K562 (cell line): ENCODE measurements at regions of chr19 and their contacts with region 1.

Region 1: GRCh38 chr19:49983645-49984229 is 22.8 kb upstream of the SIGLEC11 start:
- DNase-seq: peak; percentile 71 to 83 (median 77)
- ATAC-seq: peak; percentile 90
- H3K4me3 ChIP-seq: no peak overlapping the region
- H3K27ac ChIP-seq: no peak overlapping the region
- H3K4me1 ChIP-seq: peaks cover 13 to 20% of the 10 kb centered on the region in 2 experiments; a peak in 4 of 5 replicates
- H3K27me3 ChIP-seq: no peaks in the 10 kb centered on the region
- CTCF ChIP-seq: peak; percentile 88 to 96 (median 94)
- EP300 ChIP-seq: no peak
- POLR2A ChIP-seq: no peak
- RAD21 ChIP-seq: peak; percentile 76 to 83

Region 2: GRCh38 chr19:49889687-49890348 is 93.9 kb before region 1 on chr19:
- CTCF ChIA-PET with region 1: no interaction called
- POLR2A ChIA-PET with region 1: no interaction called
- in situ Hi-C with region 1: loop called (anchors 5 kb)
- intact Hi-C with region 1: no loop called
- DNase-seq: peak; percentile 64 to 95 (median 68)
- ATAC-seq: peak; percentile 86
- H3K4me3 ChIP-seq: peak overlapping the region; percentile 47
- H3K27ac ChIP-seq: peak overlapping the region; percentile 89
- H3K4me1 ChIP-seq: peaks cover 12 to 49% of the 10 kb centered on the region in 2 experiments
- H3K27me3 ChIP-seq: peaks cover 2 to 3% of the 10 kb centered on the region in 2 experiments; a peak in 3 of 5 replicates
- CTCF ChIP-seq: peak; percentile 89 to 94 (median 91)
- EP300 ChIP-seq: peak; percentile 34; the same call in 1 of the 2 replicates
- POLR2A ChIP-seq: peak; percentile 63
- RAD21 ChIP-seq: peak; percentile 32 to 70; a peak in 3 of 4 replicates

Region 3: DNA sequence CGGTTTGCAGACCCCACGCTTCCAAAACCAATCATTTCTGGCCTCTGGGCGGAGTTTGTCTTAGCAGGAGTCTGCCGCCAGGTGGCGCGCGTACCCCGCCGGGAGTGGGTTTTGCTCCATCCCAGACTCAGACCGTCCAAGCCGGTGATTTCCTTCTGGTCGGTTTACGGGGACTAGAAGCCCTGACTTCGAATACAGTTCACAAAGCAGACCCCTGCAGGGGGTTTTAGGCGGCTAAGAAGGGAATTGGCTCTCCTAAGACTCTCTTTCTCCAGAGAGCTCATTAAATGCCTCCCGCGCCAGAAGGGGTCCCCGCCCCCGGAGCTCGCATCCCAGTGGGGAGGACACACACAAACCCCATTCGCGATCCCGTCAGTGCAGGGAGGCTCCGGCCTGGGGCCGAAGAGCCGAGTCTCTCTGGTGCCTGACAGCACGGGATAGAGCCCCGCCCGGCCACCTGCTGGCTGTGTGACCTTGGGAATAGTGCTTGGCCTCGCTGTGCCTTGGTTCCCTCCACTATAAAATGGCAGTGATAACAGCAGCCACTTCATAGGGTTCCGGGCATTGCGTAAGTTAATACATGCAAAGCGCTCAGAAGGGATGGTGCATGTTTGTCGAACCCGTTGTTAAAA is 45.9 kb before region 1 on chr19:
- CTCF ChIA-PET with region 1: interaction called, 61 read pairs
- POLR2A ChIA-PET with region 1: interaction called, 4 read pairs
- in situ Hi-C with region 1: loop called (anchors 5 kb)
- intact Hi-C with region 1: loop called (anchors 1 kb)
- DNase-seq: peak; percentile 75 to 87 (median 80)
- ATAC-seq: peak; percentile 64
- H3K4me3 ChIP-seq: peak overlapping the region; percentile 31
- H3K27ac ChIP-seq: no peak overlapping the region
- H3K4me1 ChIP-seq: peaks cover 8 to 20% of the 10 kb centered on the region in 2 experiments; a peak in 3 of 5 replicates
- H3K27me3 ChIP-seq: no peaks in the 10 kb centered on the region
- CTCF ChIP-seq: peak; percentile 97 to 98 (median 98)
- EP300 ChIP-seq: no peak
- POLR2A ChIP-seq: no peak
- RAD21 ChIP-seq: peak; percentile 95 to 96

Region 4: DNA sequence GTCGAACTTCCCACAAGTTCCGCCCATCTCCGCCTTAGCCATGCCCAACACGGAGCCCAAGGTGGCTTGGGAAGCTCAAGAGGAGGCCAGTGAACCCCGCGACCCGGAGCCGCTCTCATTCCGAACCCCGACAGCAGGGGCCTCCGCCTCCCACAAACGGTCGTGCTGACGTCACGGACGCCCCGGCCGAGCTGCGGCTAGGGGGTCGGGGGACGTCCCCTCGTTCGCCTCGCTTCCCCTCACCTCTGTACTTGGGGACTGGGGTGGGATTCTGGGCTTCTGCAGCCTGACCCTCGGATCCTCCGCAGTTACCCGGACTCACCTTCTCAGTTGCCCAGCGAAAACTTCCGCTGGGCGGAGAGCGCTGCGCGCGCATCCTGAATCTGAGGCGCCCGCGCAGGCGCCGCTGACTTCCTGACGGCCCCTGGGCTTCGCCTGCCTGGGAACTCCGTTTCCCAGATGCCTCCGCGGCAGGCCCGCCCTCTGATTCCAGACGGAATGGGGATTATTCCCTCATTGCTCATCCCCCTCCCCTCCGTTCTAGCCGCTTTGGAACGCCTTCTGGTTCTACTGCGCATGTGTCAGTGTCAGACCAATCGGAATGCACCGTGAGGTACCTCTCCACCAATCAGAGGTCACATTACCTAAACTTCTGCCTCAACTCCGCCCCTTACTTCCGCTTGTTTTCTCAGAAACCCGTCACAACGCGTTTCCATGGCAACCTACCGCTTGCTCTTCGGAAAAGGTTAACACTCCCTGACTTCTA is 41.5 kb after region 1 on chr19 and contains the start of gene VRK3:
- CTCF ChIA-PET with region 1: no interaction called
- POLR2A ChIA-PET with region 1: no interaction called
- in situ Hi-C with region 1: no loop called
- intact Hi-C with region 1: no loop called
- DNase-seq: peak; percentile 96 to 99 (median 98)
- ATAC-seq: peak; percentile 94
- H3K4me3 ChIP-seq: peak within 1 kb of the TSS; percentile 72
- H3K27ac ChIP-seq: peak within 1 kb of the TSS; percentile 97
- H3K4me1 ChIP-seq: peaks cover 13 to 18% of the 10 kb centered on the region in 2 experiments; a peak in 4 of 5 replicates
- H3K27me3 ChIP-seq: no peaks in the 10 kb centered on the region
- CTCF ChIP-seq: peak; percentile 16 to 40 (median 20); a peak in 2 of 6 replicates
- EP300 ChIP-seq: no peak
- POLR2A ChIP-seq: peak; percentile 84
- RAD21 ChIP-seq: 0 out of 4 replicates have a peak, but pooled peaks of 1 of the 2 experiments have one; percentile 15
- polyA plus RNA-seq, gene VRK3: 33.3 to 55.9 TPM

Region 5: GRCh38 chr19:50046649-50047503 is 63.1 kb after region 1 on chr19:
- CTCF ChIA-PET with region 1: no interaction called
- POLR2A ChIA-PET with region 1: no interaction called
- in situ Hi-C with region 1: no loop called
- intact Hi-C with region 1: no loop called
- DNase-seq: peak; percentile 34 to 67 (median 54)
- ATAC-seq: no peak
- H3K4me3 ChIP-seq: no peak overlapping the region
- H3K27ac ChIP-seq: no peak overlapping the region
- H3K4me1 ChIP-seq: peaks cover 7 to 11% of the 10 kb centered on the region in 2 experiments; a peak in 3 of 5 replicates
- H3K27me3 ChIP-seq: no peaks in the 10 kb centered on the region
- CTCF ChIP-seq: peak; percentile 74 to 90 (median 85)
- EP300 ChIP-seq: no peak
- POLR2A ChIP-seq: no peak
- RAD21 ChIP-seq: peak; percentile 45 to 52